HepG2 (cell line): ENCODE measurements at regions of chr5 and their contacts with region 1.

Region 1: DNA sequence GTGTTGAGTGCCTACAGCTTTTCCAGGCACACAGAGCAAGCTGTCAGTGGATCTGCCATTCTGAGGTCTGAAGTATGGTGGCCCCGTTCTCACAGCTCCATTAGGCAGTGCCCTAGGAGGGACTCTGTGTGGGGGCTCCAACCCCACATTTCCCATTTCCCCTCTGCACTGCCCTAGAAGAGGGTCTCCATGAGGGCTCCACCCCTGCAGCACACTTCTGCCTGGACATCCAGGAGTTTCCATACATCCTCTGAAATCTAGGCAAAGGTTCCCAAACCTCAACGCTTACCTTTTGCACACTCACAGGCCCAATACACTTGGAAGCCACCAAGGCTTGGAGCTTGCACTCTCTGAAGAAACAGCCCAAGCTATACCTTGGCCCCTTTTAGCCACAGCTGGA is 131.3 kb downstream of the DEPDC1B start:
- DNase-seq: no peak
- ATAC-seq: no peak
- H3K4me3 ChIP-seq: no peak overlapping the region
- H3K27ac ChIP-seq: no peak overlapping the region
- H3K4me1 ChIP-seq: peaks cover 11% of the 10 kb centered on the region
- H3K27me3 ChIP-seq: no peaks in the 10 kb centered on the region
- CTCF ChIP-seq: no peak
- EP300 ChIP-seq: no peak
- POLR2A ChIP-seq: no peak
- RAD21 ChIP-seq: no peak

Region 2: GRCh38 chr5:59819806-59820205 is 748.8 kb before region 1 on chr5:
- CTCF ChIA-PET with region 1: no interaction called
- POLR2A ChIA-PET with region 1: no interaction called
- in situ Hi-C with region 1: no loop called
- intact Hi-C with region 1: loop called (anchors 5 kb)
- DNase-seq: no peak
- ATAC-seq: no peak
- H3K4me3 ChIP-seq: no peak overlapping the region
- H3K27ac ChIP-seq: no peak overlapping the region
- H3K4me1 ChIP-seq: no peaks in the 10 kb centered on the region
- H3K27me3 ChIP-seq: no peaks in the 10 kb centered on the region
- CTCF ChIP-seq: no peak
- EP300 ChIP-seq: no peak
- POLR2A ChIP-seq: no peak
- RAD21 ChIP-seq: no peak

Region 3: GRCh38 chr5:60522292-60522905 is 46.2 kb before region 1 on chr5:
- CTCF ChIA-PET with region 1: no interaction called
- POLR2A ChIA-PET with region 1: no interaction called
- in situ Hi-C with region 1: no loop called
- intact Hi-C with region 1: no loop called
- DNase-seq: no peak
- ATAC-seq: no peak
- H3K4me3 ChIP-seq: no peak overlapping the region
- H3K27ac ChIP-seq: no peak overlapping the region
- H3K4me1 ChIP-seq: peaks cover 28% of the 10 kb centered on the region
- H3K27me3 ChIP-seq: no peaks in the 10 kb centered on the region
- CTCF ChIP-seq: no peak
- EP300 ChIP-seq: no peak
- POLR2A ChIP-seq: no peak
- RAD21 ChIP-seq: no peak

Region 4: DNA sequence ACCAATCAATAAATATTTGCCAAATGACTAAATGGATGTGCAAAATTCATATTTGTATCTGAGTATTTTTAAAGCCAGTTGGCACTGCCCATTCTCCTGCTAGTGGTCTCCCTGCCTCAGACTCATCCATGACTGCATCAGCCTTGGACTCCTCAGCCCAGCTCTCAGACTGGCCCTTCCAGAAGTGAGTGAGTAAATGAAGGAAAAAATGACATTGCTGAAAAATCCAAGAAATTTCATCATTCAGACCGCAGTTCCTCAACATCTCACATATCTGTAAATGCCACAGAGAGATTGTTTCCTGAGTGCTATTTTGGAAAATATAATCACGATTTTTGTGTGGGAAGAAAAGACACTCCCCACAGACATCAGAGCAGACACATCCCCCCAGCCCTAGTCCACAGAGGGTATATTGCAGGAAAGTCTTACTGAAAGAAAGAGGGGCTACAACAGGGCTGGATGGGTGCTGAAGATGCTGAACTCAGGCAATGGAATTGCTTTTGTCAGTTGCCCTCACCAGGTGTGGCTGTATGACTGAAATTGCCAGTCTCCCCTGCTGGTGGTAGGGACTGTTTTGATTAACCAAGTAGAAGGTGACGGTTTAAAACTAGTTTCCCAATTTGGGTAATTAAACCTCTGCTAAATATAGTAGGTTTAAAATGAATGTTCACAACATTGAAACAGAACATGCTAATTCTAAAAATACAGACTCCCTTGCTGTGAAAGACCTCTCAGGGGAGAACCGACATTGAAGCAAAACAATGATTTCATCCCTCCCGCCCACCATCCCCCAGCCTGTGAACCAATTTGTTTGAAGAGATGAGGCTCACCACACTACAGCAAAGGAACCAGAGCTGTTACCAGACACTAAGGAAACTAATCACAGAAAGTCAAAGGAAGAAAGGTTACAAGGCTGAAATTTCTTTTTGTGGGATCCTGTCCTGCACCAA is 27.5 kb before region 1 on chr5:
- CTCF ChIA-PET with region 1: no interaction called
- POLR2A ChIA-PET with region 1: no interaction called
- in situ Hi-C with region 1: no loop called
- intact Hi-C with region 1: loop called (anchors 1 kb)
- DNase-seq: peak; percentile 32
- ATAC-seq: no peak
- H3K4me3 ChIP-seq: no peak overlapping the region
- H3K27ac ChIP-seq: peak overlapping the region; percentile 14
- H3K4me1 ChIP-seq: peaks cover 42% of the 10 kb centered on the region
- H3K27me3 ChIP-seq: no peaks in the 10 kb centered on the region
- CTCF ChIP-seq: no peak
- EP300 ChIP-seq: no peak
- POLR2A ChIP-seq: no peak
- RAD21 ChIP-seq: no peak